Activated CD8-positive, alpha-beta memory T cell treated with anti-CD3 and anti-CD28 coated beads, Interleukin-2, amount 10 ng/mL, durations not matched to agents 7 days and 5 days (primary cell): ENCODE measurements at regions of chr4 and their contacts with region 1.

Region 1: DNA sequence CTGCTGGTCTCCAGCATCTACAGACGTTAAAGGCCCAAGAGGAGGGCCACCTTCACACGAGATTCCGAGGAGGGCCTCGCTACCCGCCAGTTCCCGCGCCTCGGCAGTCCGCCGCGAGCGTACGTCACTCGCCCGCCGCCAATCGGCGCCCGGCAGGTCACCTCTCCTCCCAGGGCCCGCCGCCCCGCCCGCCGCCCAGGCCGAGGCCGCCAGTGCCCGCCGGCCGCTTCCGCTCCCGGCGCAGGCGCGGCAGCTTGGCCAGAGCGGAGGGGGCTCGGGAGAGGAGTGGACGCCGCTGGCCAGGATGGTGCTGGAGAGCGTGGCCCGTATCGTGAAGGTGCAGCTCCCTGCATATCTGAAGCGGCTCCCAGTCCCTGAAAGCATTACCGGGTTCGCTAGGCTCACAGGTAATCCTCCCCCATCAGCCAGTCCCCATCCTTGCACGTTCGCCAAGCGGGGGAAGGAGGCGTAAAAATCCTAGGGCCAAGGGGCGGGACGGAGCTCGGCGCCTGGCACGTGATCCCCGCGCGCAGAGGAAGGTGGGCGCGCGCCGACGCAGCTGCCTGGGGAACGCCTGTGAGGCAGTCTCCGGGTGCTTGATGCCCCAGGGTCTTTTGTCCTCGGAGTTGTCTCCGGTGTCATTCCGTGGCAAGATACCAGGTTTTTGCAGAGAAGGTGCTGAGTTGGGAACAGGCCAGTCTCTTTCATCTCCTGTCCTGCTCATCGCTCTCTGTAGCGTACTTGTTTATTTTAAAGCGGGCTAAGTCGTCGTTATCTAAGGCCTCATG is at the start of gene CISD2:
- DNase-seq: peak; percentile 96
- ATAC-seq: peak; percentile 87
- H3K4me3 Mint-ChIP-seq: peak within 1 kb of the TSS; percentile 90
- H3K27ac Mint-ChIP-seq: peak within 1 kb of the TSS; percentile 99
- H3K4me1 Mint-ChIP-seq: peaks cover 55% of the 10 kb centered on the region
- H3K27me3 Mint-ChIP-seq: no peaks in the 10 kb centered on the region
- total RNA-seq, gene CISD2: 31.9 to 42.3 TPM

Region 2: DNA sequence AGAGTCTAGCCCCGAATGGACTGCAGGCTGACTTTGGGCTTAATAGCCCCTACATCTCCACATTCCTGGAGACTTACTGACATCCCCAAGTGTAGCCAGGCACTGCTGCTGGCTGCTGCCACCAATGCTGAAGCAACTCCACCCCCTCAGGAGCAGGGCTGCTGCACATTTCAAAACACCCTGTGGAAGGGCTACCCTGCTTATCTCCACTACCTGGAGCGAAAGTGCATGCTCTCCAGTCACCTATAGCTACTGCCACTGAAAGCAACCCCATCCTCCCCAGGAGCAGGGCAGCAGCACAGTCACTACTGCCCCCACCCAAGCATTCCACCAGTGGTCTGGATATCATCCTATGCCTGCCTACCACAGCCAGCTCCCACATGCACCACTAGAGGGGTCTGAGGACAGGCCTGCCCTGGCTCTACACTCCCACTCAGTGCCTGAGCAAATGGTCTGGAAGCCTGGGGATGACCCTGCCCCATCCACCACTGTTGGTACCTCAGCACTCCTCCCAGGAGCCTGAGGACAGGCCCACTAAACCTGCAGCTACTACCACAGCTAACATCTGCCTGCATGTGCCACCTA is 163.5 kb before region 1 on chr4:
- CTCF ChIA-PET with region 1: no interaction called
- DNase-seq: no peak
- ATAC-seq: no peak
- H3K4me3 Mint-ChIP-seq: no peak overlapping the region
- H3K27ac Mint-ChIP-seq: no peak overlapping the region
- H3K4me1 Mint-ChIP-seq: no peaks in the 10 kb centered on the region
- H3K27me3 Mint-ChIP-seq: no peaks in the 10 kb centered on the region

Region 3: GRCh38 chr4:102826890-102827673 is 41.9 kb before region 1 on chr4 and contains the start of gene UBE2D3:
- CTCF ChIA-PET with region 1: interaction called, 36 read pairs
- DNase-seq: peak; percentile 97
- ATAC-seq: peak; percentile 52
- H3K4me3 Mint-ChIP-seq: no peak within 1 kb of the TSS
- H3K27ac Mint-ChIP-seq: no peak within 1 kb of the TSS
- H3K4me1 Mint-ChIP-seq: peaks cover 36% of the 10 kb centered on the region
- H3K27me3 Mint-ChIP-seq: no peaks in the 10 kb centered on the region
- total RNA-seq, gene UBE2D3: 357 to 421 TPM

Region 4: GRCh38 chr4:102901804-102902203 is 32.8 kb after region 1 on chr4:
- CTCF ChIA-PET with region 1: no interaction called
- DNase-seq: no peak
- ATAC-seq: no peak
- H3K4me3 Mint-ChIP-seq: no peak overlapping the region
- H3K27ac Mint-ChIP-seq: no peak overlapping the region
- H3K4me1 Mint-ChIP-seq: peaks cover 4% of the 10 kb centered on the region
- H3K27me3 Mint-ChIP-seq: no peaks in the 10 kb centered on the region